ENCODE measurements at regions of chr9 and their contacts with region 1.

Region 1: DNA sequence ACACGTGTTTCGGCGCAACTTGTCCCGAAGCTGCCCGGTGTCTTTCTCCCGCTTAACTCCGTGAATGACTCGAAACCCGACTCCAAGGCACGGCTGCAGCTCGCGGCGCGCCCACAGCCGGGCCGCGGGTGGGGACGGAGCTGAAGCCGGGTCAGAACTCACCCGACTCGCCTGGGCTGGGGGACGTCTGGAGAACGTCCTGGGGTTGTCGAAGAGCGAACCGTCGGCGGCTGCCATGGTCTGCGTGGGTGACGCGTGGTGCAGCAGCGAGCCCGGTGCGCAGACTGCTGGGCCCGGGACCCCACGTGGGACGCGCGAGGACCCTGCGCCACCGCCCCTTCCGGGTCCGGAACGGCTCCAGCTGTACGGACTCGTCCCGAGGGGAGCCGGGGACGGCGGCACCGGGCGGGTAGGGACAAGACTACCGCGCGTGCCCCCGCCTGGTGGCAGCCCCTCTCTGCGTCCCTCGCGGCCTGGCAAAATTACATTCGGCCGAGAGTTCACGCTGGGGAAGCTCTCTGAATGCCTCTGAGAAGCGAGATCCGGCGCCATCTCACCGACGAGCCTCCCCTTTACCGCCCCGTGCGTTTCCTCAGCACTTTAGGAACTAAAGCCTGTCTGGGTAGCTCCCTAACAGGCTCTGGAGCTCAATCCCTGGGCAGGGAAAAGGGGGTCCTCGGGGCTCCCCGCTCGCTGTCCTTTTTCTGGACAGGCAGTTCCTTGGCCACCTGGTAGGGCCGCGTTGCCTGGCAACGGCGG is at the start of gene DDX31:
- DNase-seq: peak; percentile 84 to 97 (median 88)
- ATAC-seq: peak; percentile 90
- H3K4me3 ChIP-seq: peak within 1 kb of the TSS; percentile 100
- H3K4me3 Mint-ChIP-seq: peak within 1 kb of the TSS; percentile 83 to 92 (median 90)
- H3K27ac ChIP-seq: peak within 1 kb of the TSS; percentile 94
- H3K27ac Mint-ChIP-seq: peak within 1 kb of the TSS; percentile 87 to 96 (median 91)
- H3K4me1 ChIP-seq: peaks cover 16 to 19% of the 10 kb centered on the region in 2 donors
- H3K4me1 Mint-ChIP-seq: peaks cover 20 to 67% (median 55%) of the 10 kb centered on the region in 7 donors
- H3K27me3 ChIP-seq: no peaks in the 10 kb centered on the region
- H3K27me3 Mint-ChIP-seq: no peaks in the 10 kb centered on the region
- total RNA-seq, gene DDX31: 13.9 to 28.0 (median 18.7) TPM

Region 2: GRCh38 chr9:132160802-132161742 is 508.8 kb before region 1 on chr9:
- CTCF ChIA-PET with region 1: no interaction called
- POLR2A ChIA-PET with region 1: no interaction called
- intact Hi-C with region 1: loop called in 1 of 2 experiments (anchors 5 kb)
- DNase-seq: peak in 8 of 9 donors; percentile 21 to 54 (median 25)
- ATAC-seq: peak; percentile 83
- H3K4me3 ChIP-seq: peak overlapping the region; percentile 64
- H3K4me3 Mint-ChIP-seq: peak overlapping the region; percentile 90 to 100 (median 94)
- H3K27ac ChIP-seq: no peak overlapping the region
- H3K27ac Mint-ChIP-seq: peak overlapping the region in 7 of 9 donors; percentile 41 to 87 (median 72)
- H3K4me1 ChIP-seq: peaks cover 6% of the 10 kb centered on the region in 2 donors
- H3K4me1 Mint-ChIP-seq: peaks cover 6 to 17% (median 9%) of the 10 kb centered on the region in 7 donors
- H3K27me3 ChIP-seq: peaks cover 0 to 16% of the 10 kb centered on the region in 2 donors
- H3K27me3 Mint-ChIP-seq: peaks cover 37 to 66% (median 47%) of the 10 kb centered on the region in 5 donors

Region 3: GRCh38 chr9:132507746-132508469 is 162.0 kb before region 1 on chr9:
- CTCF ChIA-PET with region 1: no interaction called
- POLR2A ChIA-PET with region 1: no interaction called
- intact Hi-C with region 1: loop called in 1 of 2 experiments (anchors 5 kb)
- DNase-seq: peak; percentile 21 to 62 (median 52)
- ATAC-seq: peak; percentile 74
- H3K4me3 ChIP-seq: no peak overlapping the region
- H3K4me3 Mint-ChIP-seq: no peak overlapping the region
- H3K27ac ChIP-seq: no peak overlapping the region
- H3K27ac Mint-ChIP-seq: no peak overlapping the region
- H3K4me1 ChIP-seq: peaks cover 0 to 7% of the 10 kb centered on the region in 2 donors
- H3K4me1 Mint-ChIP-seq: peaks cover 0 to 14% (median 12%) of the 10 kb centered on the region in 7 donors
- H3K27me3 ChIP-seq: no peaks in the 10 kb centered on the region
- H3K27me3 Mint-ChIP-seq: peaks cover 3 to 24% (median 15%) of the 10 kb centered on the region in 5 donors

Region 4: DNA sequence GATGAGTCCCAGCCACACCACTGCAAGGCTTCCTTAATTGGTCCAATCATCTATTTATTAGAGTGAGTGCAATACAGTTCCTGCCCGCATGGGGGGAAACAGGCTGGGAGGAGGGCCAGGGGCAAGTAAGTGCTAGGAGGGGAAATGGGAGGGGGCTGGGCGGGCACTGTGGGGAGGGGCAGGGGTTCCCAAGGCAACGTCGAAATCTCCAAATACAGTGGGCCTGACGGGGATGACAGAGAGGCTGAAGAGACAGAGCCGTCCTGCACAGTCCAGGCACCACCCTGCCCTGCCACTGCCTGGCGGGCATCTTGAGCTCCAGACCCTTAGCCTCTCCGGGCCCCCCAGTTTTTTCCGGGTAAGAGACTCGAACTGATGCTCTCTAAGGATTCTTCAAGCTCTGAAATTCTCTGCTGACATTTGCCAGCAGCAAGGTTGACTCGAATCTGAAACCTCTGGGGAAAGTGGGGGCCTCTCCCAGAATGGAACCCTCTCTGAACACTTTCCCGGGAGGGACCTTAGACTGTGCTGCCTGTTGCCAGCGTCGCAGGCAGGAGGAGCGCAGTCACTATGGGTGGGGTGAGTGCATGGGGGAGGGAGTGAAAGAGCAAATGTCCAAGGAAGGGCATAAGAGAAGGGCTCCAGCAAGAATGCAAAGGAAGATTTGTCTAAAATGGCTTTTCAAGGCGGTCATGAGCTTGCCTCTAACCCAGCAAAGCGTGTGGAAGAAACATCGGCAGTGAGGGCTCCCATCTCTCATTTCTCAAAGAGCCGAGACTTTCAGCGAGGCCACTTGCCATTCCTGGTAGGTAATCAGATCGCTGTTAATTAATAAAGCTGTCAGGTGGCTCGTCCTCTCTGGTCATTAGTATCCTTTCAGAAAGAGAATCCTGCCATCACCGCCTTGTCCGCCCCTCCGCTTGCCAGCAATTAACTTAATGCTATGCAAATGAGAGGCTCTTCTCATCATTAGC is 99.3 kb after region 1 on chr9:
- CTCF ChIA-PET with region 1: no interaction called
- POLR2A ChIA-PET with region 1: interaction called, 11 read pairs
- intact Hi-C with region 1: loop called (anchors 1 kb)
- DNase-seq: peak in 8 of 9 donors; percentile 42 to 69 (median 60)
- ATAC-seq: peak; percentile 86
- H3K4me3 ChIP-seq: peak overlapping the region; percentile 86
- H3K4me3 Mint-ChIP-seq: peak overlapping the region; percentile 95 to 100 (median 98)
- H3K27ac ChIP-seq: peak overlapping the region; percentile 77
- H3K27ac Mint-ChIP-seq: peak overlapping the region; percentile 90 to 99 (median 97)
- H3K4me1 ChIP-seq: peaks cover 3 to 9% of the 10 kb centered on the region in 2 donors
- H3K4me1 Mint-ChIP-seq: peaks cover 8 to 37% (median 27%) of the 10 kb centered on the region in 7 donors
- H3K27me3 ChIP-seq: no peaks in the 10 kb centered on the region
- H3K27me3 Mint-ChIP-seq: peaks cover 0 to 20% (median 0%) of the 10 kb centered on the region in 5 donors

Region 5: DNA sequence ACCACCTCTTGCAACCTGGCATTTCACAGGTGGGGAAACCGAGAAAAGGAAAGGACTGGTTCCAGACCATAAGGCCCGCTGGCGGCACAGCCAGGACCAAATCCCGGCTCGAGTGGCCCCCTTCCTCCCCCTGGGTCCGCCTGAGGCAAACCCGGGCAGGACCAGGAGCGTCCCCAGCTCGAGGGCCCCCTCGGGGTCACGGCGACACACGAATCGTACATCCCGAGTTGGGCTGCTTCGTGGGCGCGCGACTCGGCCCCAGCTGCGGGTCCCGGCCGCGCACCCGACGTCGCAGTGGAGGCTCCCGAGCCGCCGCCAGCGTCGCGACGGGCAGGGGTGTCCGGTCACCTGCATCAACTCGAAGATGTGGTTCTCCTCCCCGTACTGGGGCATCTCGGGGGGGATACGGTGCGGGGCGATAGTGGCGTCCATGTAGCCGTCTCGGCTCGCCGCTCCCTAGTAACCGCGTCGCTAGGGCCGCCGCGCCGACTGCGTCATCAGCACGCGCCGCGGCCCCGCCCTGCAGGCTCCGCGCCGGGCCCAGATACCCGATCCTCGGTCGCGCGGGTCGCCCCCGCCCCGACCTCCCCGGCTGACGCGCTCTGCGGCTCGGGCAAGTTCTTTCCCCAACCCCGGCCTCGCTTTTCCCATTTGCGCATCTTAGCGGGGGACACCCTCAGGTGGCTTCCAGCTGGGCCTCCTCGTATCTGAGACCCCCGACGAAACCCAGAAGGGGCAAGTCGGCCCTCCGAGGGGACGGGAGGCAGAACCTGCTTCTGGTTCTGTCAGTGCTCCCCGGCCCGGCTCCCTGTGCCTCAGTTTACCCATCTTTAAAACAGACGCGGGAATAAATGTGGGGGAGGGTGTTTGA is 208.2 kb after region 1 on chr9 and contains the start of gene AK8:
- CTCF ChIA-PET with region 1: no interaction called
- POLR2A ChIA-PET with region 1: interaction called, 9 read pairs
- intact Hi-C with region 1: loop called in 1 of 2 experiments (anchors 1 kb)
- DNase-seq: peak; percentile 69 to 88 (median 80)
- ATAC-seq: peak; percentile 91
- H3K4me3 ChIP-seq: peak within 1 kb of the TSS; percentile 98
- H3K4me3 Mint-ChIP-seq: peak within 1 kb of the TSS; percentile 73 to 93 (median 81)
- H3K27ac ChIP-seq: peak within 1 kb of the TSS; percentile 74
- H3K27ac Mint-ChIP-seq: peak within 1 kb of the TSS; percentile 71 to 89 (median 85)
- H3K4me1 ChIP-seq: peaks cover 0 to 6% of the 10 kb centered on the region in 2 donors
- H3K4me1 Mint-ChIP-seq: peaks cover 5 to 30% (median 7%) of the 10 kb centered on the region in 7 donors
- H3K27me3 ChIP-seq: no peaks in the 10 kb centered on the region
- H3K27me3 Mint-ChIP-seq: peaks cover 0 to 12% (median 0%) of the 10 kb centered on the region in 5 donors
- total RNA-seq, gene AK8: 0.10 to 0.20 TPM in 2 of 5 experiments, not detected in the others

Measured in naive thymus-derived CD4-positive, alpha-beta T cell (primary cell).